PC-9 (cell line): ENCODE measurements at regions of chr22 and their contacts with region 1.

Region 1: GRCh38 chr22:39985383-39986035 is 9.2 kb upstream of the FAM83F start:
- DNase-seq: no peak
- H3K4me3 ChIP-seq: no peak overlapping the region
- H3K27ac ChIP-seq: no peak overlapping the region
- H3K4me1 ChIP-seq: no peaks in the 10 kb centered on the region
- H3K27me3 ChIP-seq: peaks cover 68% of the 10 kb centered on the region
- CTCF ChIP-seq: no peak

Region 2: DNA sequence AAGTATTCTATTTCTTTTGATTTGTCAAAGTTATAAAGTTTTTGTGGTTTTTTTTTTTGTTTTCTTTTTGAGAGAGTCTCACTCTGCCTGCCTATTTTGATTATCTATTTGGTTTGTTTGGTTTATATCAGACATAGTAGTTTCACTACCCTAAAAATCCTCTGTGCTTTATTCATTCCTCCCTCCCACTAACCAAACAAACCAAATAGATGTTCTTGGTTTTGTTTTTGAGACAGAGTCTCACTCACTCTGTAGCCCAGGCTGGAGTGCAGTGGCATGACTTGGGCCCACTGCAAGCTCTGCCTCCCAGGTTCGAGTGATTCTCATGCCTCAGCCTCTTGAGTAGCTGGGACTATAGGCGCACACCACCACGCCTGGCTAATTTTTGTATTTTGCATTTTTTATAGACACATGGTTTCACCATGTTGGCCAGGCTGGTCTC is 159.8 kb before region 1 on chr22:
- CTCF ChIA-PET with region 1: interaction called, 12 read pairs
- POLR2A ChIA-PET with region 1: no interaction called
- intact Hi-C with region 1: no loop called
- DNase-seq: no peak
- H3K4me3 ChIP-seq: no peak overlapping the region
- H3K27ac ChIP-seq: no peak overlapping the region
- H3K4me1 ChIP-seq: 0 out of 2 replicates have a peak, but pooled peaks cover 1% of the 10 kb centered on the region
- H3K27me3 ChIP-seq: peaks cover 12% of the 10 kb centered on the region
- CTCF ChIP-seq: no peak